Posterior vena cava (tissue), 2 donors: ENCODE measurements at regions of chr1 and their contacts with region 1.

Region 1: DNA sequence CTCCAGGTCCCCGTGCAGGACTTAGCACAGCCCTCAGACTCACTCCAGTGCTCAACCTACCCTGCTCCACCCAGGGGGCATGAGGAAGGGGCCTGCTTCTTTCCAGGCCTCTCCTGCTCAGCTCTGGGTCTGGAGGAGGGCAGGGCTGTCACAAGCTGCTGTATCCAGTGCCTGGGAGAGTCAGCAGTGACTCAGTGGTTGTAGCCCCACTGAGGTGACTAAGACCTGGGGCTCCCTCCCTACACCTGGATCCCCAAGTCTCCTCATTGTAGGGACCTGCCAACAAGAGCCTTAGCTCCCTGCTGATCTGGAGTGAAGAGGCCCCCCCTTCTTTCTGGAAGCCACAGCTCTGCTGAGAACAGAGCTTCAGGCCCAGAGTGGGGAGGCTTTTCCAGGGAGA is 36.1 kb upstream of the FAM131C start:
- DNase-seq: no peak

Region 2: DNA sequence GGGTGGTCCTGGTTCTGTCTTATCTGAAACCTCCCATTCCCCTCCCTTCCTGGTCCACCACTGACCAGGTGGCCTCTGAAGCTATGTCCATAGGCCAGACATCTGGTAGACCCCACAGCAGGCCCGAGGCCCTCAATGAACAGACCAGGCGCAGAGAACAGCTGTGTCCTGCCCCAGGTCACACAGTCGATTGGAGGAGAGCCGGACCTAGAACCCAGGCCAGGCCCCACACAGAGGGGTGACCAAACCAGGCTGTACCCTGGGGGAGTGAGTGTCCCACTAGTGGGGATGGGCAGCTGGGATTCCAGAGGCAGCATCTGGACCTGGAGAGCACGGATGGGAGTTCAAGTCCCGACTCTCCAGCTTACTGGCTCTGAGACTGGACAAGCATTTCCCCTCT is 375.4 kb after region 1 on chr1:
- intact Hi-C with region 1: loop called in 1 of 2 experiments (anchors 5 kb)
- DNase-seq: no peak